GM10248 (cell line): ENCODE measurements at regions of chr22 and their contacts with region 1.

Region 1: DNA sequence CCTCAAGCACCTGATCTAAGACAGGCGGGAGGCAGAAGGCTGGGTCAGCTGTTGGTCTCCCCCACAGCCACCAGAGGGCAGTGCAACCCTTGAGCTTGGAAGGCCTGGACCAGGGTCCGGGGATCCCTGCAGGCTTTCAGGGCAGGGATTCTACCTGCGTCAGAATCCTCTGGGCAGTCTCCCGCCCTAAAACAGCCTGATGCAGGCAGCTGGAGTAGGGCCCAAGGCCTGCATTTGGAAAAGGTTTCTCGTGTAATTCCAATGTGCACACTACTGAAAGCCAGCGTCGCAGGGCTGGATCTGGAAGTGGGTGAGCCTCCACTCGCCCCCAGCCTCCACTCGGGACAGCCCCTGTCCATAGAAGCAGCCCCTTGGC is 31.8 kb downstream of the BID start:
- DNase-seq: peak; percentile 92
- CTCF ChIP-seq: peak; percentile 87

Region 2: DNA sequence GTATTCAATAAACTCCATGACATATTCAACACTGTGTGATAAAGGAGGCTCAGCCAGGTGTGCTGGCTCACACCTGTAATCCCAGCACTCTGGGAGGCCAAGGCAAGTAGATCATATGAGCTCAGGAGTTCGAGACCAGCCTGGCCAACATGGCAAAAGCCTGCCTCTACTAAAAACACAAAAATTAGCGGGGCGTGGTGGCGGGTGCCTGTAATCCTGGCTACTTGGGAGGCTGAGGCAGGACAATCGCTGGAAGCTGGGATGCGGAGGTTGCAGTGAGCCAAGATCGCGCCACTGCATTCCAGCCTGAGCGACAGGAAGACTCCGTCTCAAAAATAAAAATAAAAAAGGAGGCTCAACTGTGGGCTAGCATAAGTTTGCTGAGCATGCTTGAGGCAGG is 183.3 kb before region 1 on chr22:
- CTCF ChIA-PET with region 1: interaction called, 25 read pairs
- POLR2A ChIA-PET with region 1: no interaction called
- DNase-seq: no peak
- CTCF ChIP-seq: no peak

Region 3: DNA sequence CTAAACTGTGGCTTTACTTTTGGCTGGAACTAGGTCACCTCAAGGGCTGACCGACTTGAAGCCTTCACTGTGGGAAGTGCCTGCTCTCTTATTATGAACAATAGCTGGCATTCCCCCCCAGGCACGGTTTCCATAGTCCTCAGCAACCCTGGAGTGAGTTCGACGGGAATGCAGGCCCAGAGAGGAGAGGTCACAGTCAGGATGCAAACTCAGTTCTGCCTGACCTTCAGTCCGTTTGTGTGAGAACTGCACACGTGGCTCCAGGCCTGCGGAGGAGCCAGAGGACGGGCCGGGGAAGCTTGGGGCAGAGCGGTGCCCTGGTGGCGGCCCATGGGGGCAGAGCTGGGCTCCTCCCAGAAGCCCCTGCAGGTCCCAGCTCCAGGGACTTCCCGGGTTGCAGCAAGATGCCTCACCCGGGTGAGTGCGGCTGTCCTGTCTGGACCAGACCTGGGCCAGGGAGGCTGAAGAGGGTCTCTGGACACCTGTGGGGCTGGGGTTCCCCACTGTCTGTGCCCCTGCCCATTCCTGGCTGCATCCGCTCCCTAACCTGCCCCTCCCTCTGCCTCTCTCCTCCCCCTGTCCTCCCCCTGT is 162.0 kb before region 1 on chr22:
- CTCF ChIA-PET with region 1: no interaction called
- POLR2A ChIA-PET with region 1: no interaction called
- DNase-seq: no peak
- CTCF ChIP-seq: no peak

Region 4: GRCh38 chr22:17753401-17753989 is 11.0 kb after region 1 on chr22:
- CTCF ChIA-PET with region 1: interaction called, 30 read pairs
- POLR2A ChIA-PET with region 1: no interaction called
- DNase-seq: peak; percentile 15
- CTCF ChIP-seq: no peak

Region 5: GRCh38 chr22:17773606-17774205 is 31.2 kb after region 1 on chr22:
- CTCF ChIA-PET with region 1: interaction called, 46 read pairs
- POLR2A ChIA-PET with region 1: no interaction called
- DNase-seq: peak; percentile 68
- CTCF ChIP-seq: no peak

Region 6: DNA sequence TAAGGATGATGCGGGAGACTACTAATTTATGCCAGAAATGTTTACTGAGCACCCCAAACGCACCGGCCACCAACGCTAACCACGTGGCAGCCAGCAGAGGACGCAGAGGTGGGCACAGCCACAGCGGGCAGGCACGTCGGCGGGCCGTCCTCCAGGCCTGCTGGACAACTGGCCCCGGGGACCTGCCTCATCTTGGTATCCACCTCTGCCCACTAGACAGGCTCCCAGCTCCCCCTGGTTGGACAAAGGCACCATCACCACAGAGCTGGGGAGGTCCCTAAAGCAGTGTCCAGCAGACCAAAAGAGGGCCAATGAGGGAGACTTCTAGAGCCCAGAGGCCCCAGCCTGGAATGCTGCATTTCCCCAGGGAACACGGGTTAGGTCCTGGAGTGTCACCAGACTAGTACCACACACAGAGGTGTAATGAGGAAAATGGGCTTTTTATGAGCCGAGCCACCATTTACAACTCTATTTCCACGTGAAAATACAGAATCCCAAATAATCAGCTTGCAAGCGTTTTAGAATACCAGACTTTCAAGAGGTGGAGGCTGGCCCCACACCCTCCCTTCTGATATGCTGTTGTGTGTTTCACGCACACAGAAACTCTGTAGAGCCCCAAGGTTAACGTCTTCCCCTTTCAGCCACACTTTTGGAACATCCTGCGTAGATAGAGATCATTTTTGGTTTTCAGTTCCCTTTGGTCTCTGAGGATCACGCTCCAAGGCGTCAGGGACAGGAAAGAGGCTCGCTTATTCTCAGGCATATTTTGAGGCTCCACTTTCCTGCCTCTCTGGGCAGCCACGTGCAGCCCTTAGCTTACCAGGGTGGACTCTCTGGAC is 55.4 kb after region 1 on chr22:
- CTCF ChIA-PET with region 1: interaction called, 47 read pairs
- POLR2A ChIA-PET with region 1: interaction called, 4 read pairs
- DNase-seq: peak; percentile 78
- CTCF ChIP-seq: no peak

Region 7: GRCh38 chr22:18012531-18012930 is 270.0 kb after region 1 on chr22:
- CTCF ChIA-PET with region 1: no interaction called
- POLR2A ChIA-PET with region 1: no interaction called
- DNase-seq: no peak
- CTCF ChIP-seq: no peak